CD8-positive, alpha-beta T cell (primary cell): ENCODE measurements at regions of chr5 and their contacts with region 1.

Region 1: DNA sequence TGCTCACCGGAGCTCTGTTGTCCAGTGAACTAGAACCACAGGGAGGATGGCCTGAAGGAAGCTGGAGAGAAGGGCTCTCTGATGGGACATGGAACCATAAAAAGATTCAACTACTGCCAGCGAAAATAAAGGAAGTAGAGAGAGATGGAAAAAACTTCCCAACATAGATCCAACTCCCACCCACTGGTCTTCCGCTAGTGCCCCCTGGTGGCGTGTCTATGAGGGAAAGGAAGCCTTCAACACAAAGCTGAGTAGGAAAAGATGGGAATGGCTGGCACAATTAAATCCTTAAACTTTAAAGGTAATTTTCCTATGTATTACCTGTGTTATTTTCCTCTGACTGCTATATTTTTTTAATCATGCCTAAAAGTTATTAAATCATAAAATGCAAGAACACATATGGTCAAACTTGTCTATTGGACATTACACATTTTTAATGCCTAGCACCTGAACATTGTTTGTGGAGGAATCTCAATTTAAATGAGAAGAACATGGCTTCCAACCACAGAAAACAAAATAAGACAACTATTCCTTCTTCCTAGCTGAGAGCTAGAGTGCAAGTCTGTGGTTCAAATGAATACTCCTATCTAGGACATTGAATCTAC is 51.5 kb downstream of the CEP120 start:
- DNase-seq: peak in 7 of 9 experiments; percentile 6 to 52 (median 35)
- ATAC-seq: no peak
- H3K4me3 ChIP-seq: no peak overlapping the region
- H3K4me3 Mint-ChIP-seq: no peak overlapping the region
- H3K27ac ChIP-seq: no peak overlapping the region
- H3K27ac Mint-ChIP-seq: no peak overlapping the region
- H3K4me1 ChIP-seq: no peaks in the 10 kb centered on the region
- H3K4me1 Mint-ChIP-seq: peaks cover 5% of the 10 kb centered on the region
- H3K27me3 ChIP-seq: no peaks in the 10 kb centered on the region
- H3K27me3 Mint-ChIP-seq: no peaks in the 10 kb centered on the region
- CTCF ChIP-seq: peak; percentile 53

Region 2: GRCh38 chr5:122835681-122836080 is 536.0 kb before region 1 on chr5:
- CTCF ChIA-PET with region 1: no interaction called
- POLR2A ChIA-PET with region 1: no interaction called
- intact Hi-C with region 1: no loop called
- DNase-seq: no peak
- ATAC-seq: no peak
- H3K4me3 ChIP-seq: no peak overlapping the region
- H3K4me3 Mint-ChIP-seq: no peak overlapping the region
- H3K27ac ChIP-seq: no peak overlapping the region
- H3K27ac Mint-ChIP-seq: no peak overlapping the region
- H3K4me1 ChIP-seq: no peaks in the 10 kb centered on the region
- H3K4me1 Mint-ChIP-seq: no peaks in the 10 kb centered on the region
- H3K27me3 ChIP-seq: no peaks in the 10 kb centered on the region
- H3K27me3 Mint-ChIP-seq: peaks cover 5% of the 10 kb centered on the region
- CTCF ChIP-seq: no peak

Region 3: GRCh38 chr5:122896598-122897282 is 474.9 kb before region 1 on chr5:
- CTCF ChIA-PET with region 1: no interaction called
- POLR2A ChIA-PET with region 1: no interaction called
- intact Hi-C with region 1: loop called (anchors 5 kb)
- DNase-seq: peak in 2 of 9 experiments; percentile 15 to 19
- ATAC-seq: no peak
- H3K4me3 ChIP-seq: no peak overlapping the region
- H3K4me3 Mint-ChIP-seq: no peak overlapping the region
- H3K27ac ChIP-seq: no peak overlapping the region
- H3K27ac Mint-ChIP-seq: no peak overlapping the region
- H3K4me1 ChIP-seq: no peaks in the 10 kb centered on the region
- H3K4me1 Mint-ChIP-seq: peaks cover under 1% of the 10 kb centered on the region
- H3K27me3 ChIP-seq: no peaks in the 10 kb centered on the region
- H3K27me3 Mint-ChIP-seq: no peaks in the 10 kb centered on the region
- CTCF ChIP-seq: no peak

Region 4: DNA sequence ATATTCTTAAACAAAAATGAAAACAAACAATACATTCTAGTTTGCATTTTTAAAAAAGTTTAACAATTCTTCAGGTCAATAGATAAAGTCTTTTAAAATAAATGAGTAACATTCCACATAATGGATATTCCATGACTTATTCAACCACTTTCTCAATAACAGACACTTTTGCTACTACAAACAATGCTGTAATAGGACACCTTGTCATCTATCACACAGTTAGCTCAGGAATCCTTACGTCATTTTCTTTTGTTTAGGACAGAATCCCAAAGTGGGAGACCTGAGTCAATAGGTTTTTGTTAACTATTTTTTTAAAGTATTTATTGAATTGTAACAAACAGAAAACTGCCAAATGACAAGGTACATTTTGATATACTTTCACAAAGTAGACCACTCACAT is 20.9 kb before region 1 on chr5:
- CTCF ChIA-PET with region 1: no interaction called
- POLR2A ChIA-PET with region 1: no interaction called
- intact Hi-C with region 1: no loop called
- DNase-seq: no peak
- ATAC-seq: no peak
- H3K4me3 ChIP-seq: no peak overlapping the region
- H3K4me3 Mint-ChIP-seq: no peak overlapping the region
- H3K27ac ChIP-seq: no peak overlapping the region
- H3K27ac Mint-ChIP-seq: no peak overlapping the region
- H3K4me1 ChIP-seq: no peaks in the 10 kb centered on the region
- H3K4me1 Mint-ChIP-seq: no peaks in the 10 kb centered on the region
- H3K27me3 ChIP-seq: no peaks in the 10 kb centered on the region
- H3K27me3 Mint-ChIP-seq: no peaks in the 10 kb centered on the region
- CTCF ChIP-seq: no peak

Region 5: GRCh38 chr5:123389794-123390193 is 18.1 kb after region 1 on chr5:
- CTCF ChIA-PET with region 1: no interaction called
- POLR2A ChIA-PET with region 1: no interaction called
- intact Hi-C with region 1: loop called in 1 of 2 experiments (anchors 2 kb)
- DNase-seq: no peak
- ATAC-seq: no peak
- H3K4me3 ChIP-seq: no peak overlapping the region
- H3K4me3 Mint-ChIP-seq: no peak overlapping the region
- H3K27ac ChIP-seq: no peak overlapping the region
- H3K27ac Mint-ChIP-seq: no peak overlapping the region
- H3K4me1 ChIP-seq: no peaks in the 10 kb centered on the region
- H3K4me1 Mint-ChIP-seq: no peaks in the 10 kb centered on the region
- H3K27me3 ChIP-seq: no peaks in the 10 kb centered on the region
- H3K27me3 Mint-ChIP-seq: no peaks in the 10 kb centered on the region
- CTCF ChIP-seq: no peak